Psoas muscle (tissue), 8 donors: ENCODE measurements at regions of chr16 and their contacts with region 1.

Region 1: GRCh38 chr16:77236063-77236511 is 36.9 kb downstream of the SYCE1L start:
- DNase-seq: peak; percentile 83 to 90
- ATAC-seq: peak; percentile 96 to 99 (median 98)
- H3K4me3 ChIP-seq: no peak overlapping the region
- H3K27ac ChIP-seq: no peak overlapping the region
- H3K4me1 ChIP-seq: no peaks in the 10 kb centered on the region
- H3K27me3 ChIP-seq: no peaks in the 10 kb centered on the region
- CTCF ChIP-seq: peak; percentile 98

Region 2: DNA sequence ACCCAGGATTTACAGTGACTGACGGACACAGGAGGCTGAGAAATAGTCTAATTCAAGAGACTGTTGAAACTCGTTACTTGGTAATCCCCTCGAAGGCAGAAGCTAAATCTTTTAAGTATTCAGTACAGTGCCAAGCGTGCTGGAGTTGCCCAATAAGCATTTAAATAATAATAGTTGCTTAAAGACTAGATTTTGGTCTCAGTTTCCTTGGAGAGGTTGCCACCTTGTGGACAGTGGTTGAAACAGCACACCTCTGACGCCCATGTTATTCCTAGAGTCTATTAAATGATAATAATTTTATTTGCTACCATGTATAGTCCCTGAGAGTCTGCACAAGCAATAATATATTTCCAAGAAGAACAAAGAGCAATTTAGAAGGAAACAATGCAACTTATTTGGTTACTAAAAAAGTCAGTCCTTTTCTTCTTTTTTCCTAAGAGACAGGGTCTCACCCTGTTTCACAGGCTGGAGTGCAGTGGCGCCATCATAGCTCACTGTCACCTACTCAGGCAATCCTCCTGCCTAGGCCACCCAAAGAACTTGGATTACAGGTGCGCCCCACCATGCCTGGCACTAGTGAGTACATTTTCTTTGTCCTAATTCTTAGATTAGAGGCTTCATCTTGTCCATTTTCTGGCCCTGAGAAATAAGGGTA is 348.2 kb after region 1 on chr16:
- intact Hi-C with region 1: loop called (anchors 1 to 2 kb)
- DNase-seq: no peak
- ATAC-seq: peak in 2 of 4 donors; percentile 31 to 58
- H3K4me3 ChIP-seq: no peak overlapping the region
- H3K27ac ChIP-seq: no peak overlapping the region
- H3K4me1 ChIP-seq: no peaks in the 10 kb centered on the region
- H3K27me3 ChIP-seq: no peaks in the 10 kb centered on the region
- CTCF ChIP-seq: peak; percentile 85

Region 3: GRCh38 chr16:77660311-77660710 is 424.2 kb after region 1 on chr16:
- intact Hi-C with region 1: loop called in 1 of 2 experiments (anchors 5 kb)
- DNase-seq: no peak
- ATAC-seq: no peak
- H3K4me3 ChIP-seq: no peak overlapping the region
- H3K27ac ChIP-seq: no peak overlapping the region
- H3K4me1 ChIP-seq: no peaks in the 10 kb centered on the region
- H3K27me3 ChIP-seq: no peaks in the 10 kb centered on the region
- CTCF ChIP-seq: peak; percentile 38